ENCODE measurements at regions of chr15 and their contacts with region 1.

Region 1: GRCh38 chr15:75842722-75843551 is at the start of gene UBE2Q2:
- H3K4me3 ChIP-seq: peak within 1 kb of the TSS; percentile 86
- H3K27ac ChIP-seq: peak within 1 kb of the TSS; percentile 93
- H3K4me1 ChIP-seq: peaks cover 25% of the 10 kb centered on the region
- CTCF ChIP-seq: no peak

Region 2: DNA sequence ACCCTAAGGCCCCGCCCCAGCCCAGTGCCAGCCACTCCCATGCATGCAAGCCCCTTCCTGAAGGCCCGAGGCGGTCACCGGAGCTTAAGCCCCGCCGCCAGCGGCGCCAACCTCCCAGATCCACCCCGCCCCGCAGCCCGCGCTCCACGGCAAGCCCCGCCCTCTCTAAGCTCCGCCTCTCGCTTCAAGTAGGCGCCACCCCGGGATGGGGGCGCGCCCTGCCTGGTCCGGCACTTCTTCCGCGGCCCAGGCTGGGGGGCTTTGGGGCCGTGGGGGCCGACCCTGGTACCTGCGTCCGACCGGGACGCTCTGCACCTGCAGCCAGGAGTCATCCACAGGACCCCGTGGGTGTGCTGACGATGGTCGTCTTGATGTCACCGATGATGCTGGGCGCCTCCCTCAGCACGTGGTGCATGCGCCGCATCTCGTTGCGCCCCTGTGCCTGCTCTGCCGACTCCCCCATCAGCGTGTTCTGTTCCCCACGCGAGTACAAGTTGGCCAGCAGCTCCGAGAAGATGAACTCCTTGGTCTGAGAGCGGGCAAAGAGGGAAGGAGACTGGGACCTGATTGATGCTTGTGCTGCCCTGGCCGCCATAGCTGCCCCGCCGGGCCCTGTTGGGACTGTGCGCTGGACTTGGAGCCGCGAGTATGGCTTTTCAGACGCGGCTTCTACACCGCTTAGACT is 104.1 kb before region 1 on chr15:
- CTCF ChIA-PET with region 1: no interaction called
- POLR2A ChIA-PET with region 1: no interaction called
- H3K4me3 ChIP-seq: peak overlapping the region; percentile 66
- H3K27ac ChIP-seq: no peak overlapping the region; the same call in 1 of the 2 replicates
- H3K4me1 ChIP-seq: no peaks in the 10 kb centered on the region
- CTCF ChIP-seq: 0 out of 2 replicates have a peak, but pooled peaks have one; percentile 16

Region 3: GRCh38 chr15:75750261-75751050 is 92.5 kb before region 1 on chr15:
- CTCF ChIA-PET with region 1: no interaction called
- POLR2A ChIA-PET with region 1: no interaction called
- H3K4me3 ChIP-seq: no peak overlapping the region
- H3K27ac ChIP-seq: no peak overlapping the region
- H3K4me1 ChIP-seq: no peaks in the 10 kb centered on the region
- CTCF ChIP-seq: no peak

Region 4: GRCh38 chr15:75903331-75904239 is 60.6 kb after region 1 on chr15 and contains the start of gene FBXO22:
- CTCF ChIA-PET with region 1: interaction called, 3 read pairs
- POLR2A ChIA-PET with region 1: interaction called, 10 read pairs
- H3K4me3 ChIP-seq: peak within 1 kb of the TSS; percentile 98
- H3K27ac ChIP-seq: peak within 1 kb of the TSS; percentile 99
- H3K4me1 ChIP-seq: peaks cover 19% of the 10 kb centered on the region
- CTCF ChIP-seq: no peak